ENCODE measurements at regions of chr11 and their contacts with region 1.

Region 1: DNA sequence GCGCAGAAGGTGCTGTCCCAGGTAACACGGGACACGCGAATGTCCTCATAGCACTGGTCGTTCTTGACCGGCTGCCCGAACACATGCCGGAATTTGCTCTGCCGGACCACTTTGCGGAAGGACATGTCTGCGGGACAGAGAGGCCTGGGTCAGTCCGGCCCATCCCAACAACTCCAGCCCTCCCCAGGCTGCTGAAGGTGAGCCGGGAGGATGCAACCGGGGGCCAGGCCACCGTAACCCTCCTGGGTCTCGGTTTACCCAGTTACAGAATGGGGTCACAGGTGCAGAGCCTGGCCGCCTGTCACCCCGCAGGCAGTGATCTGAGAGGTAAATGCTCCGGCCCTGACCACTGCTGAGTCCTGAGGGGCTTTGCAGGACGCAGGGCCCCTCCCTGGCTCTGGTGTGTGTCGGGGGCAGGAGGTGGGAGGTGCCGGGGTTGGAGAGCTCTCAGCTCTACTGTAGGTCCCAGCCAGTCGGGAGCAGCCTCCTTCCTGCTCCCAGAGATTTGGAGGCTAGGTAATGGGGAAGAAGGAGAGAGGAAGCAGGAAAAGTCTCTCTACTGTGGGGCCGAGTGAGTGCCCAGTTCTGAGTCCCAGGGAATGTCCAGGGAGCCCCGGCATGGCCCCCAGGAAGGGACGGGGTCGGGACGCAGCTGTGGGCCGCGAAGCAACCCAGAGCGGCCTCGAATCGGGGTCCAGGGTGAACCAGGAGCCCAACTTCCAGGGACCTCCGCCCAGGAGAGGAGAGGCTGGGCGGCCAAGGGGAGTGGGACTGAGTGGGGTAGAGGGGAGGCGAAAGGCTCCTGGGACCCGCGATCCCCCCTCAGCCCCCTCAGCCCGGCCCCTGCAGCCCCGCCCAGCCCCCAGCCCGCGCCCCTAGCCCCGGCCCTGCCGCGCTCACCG is 521 bp downstream of the CORO1B start:
- DNase-seq: no peak
- ATAC-seq: peak; percentile 29
- H3K4me3 ChIP-seq: peak overlapping the region; percentile 84 to 97 (median 92)
- H3K27ac ChIP-seq: peak overlapping the region; percentile 63
- H3K4me1 ChIP-seq: peaks cover 27% of the 10 kb centered on the region
- H3K27me3 ChIP-seq: peaks cover 0 to 1% of the 10 kb centered on the region in 2 experiments; a peak in 1 of 5 replicates
- CTCF ChIP-seq: no peak
- EP300 ChIP-seq: no peak
- POLR2A ChIP-seq: no peak
- RAD21 ChIP-seq: no peak

Region 2: GRCh38 chr11:67428052-67428914 is 14.5 kb before region 1 on chr11 and contains the start of gene RPS6KB2:
- CTCF ChIA-PET with region 1: no interaction called
- POLR2A ChIA-PET with region 1: interaction called, 10 read pairs
- in situ Hi-C with region 1: no loop called
- intact Hi-C with region 1: loop called (anchors 2 kb)
- DNase-seq: peak; percentile 93
- ATAC-seq: peak; percentile 81
- H3K4me3 ChIP-seq: peak within 1 kb of the TSS; percentile 84 to 98 (median 90)
- H3K27ac ChIP-seq: peak within 1 kb of the TSS; percentile 85
- H3K4me1 ChIP-seq: peaks cover 36% of the 10 kb centered on the region
- H3K27me3 ChIP-seq: no peaks in the 10 kb centered on the region; a peak in 1 of 5 replicates
- CTCF ChIP-seq: no peak
- EP300 ChIP-seq: peak in 1 of 2 experiments; percentile 32; a peak in 1 of 4 replicates
- POLR2A ChIP-seq: peak; percentile 80
- RAD21 ChIP-seq: no peak
- total RNA-seq, gene RPS6KB2: 35.3 and 54.8 TPM in 2 replicates